RWPE1 (cell line): ENCODE measurements at regions of chr11 and their contacts with region 1.

Region 1: GRCh38 chr11:75450826-75451821 is 18.1 kb upstream of the KLHL35 start:
- DNase-seq: no peak
- H3K27ac ChIP-seq: no peak overlapping the region
- CTCF ChIP-seq: peak; percentile 68

Region 2: GRCh38 chr11:75468534-75469340 is 17.6 kb after region 1 on chr11:
- CTCF ChIA-PET with region 1: interaction called, 11 read pairs
- POLR2A ChIA-PET with region 1: no interaction called
- DNase-seq: no peak
- H3K27ac ChIP-seq: no peak overlapping the region
- CTCF ChIP-seq: no peak